Natural killer cell (primary cell): ENCODE measurements at regions of chr11 and their contacts with region 1.

Region 1: DNA sequence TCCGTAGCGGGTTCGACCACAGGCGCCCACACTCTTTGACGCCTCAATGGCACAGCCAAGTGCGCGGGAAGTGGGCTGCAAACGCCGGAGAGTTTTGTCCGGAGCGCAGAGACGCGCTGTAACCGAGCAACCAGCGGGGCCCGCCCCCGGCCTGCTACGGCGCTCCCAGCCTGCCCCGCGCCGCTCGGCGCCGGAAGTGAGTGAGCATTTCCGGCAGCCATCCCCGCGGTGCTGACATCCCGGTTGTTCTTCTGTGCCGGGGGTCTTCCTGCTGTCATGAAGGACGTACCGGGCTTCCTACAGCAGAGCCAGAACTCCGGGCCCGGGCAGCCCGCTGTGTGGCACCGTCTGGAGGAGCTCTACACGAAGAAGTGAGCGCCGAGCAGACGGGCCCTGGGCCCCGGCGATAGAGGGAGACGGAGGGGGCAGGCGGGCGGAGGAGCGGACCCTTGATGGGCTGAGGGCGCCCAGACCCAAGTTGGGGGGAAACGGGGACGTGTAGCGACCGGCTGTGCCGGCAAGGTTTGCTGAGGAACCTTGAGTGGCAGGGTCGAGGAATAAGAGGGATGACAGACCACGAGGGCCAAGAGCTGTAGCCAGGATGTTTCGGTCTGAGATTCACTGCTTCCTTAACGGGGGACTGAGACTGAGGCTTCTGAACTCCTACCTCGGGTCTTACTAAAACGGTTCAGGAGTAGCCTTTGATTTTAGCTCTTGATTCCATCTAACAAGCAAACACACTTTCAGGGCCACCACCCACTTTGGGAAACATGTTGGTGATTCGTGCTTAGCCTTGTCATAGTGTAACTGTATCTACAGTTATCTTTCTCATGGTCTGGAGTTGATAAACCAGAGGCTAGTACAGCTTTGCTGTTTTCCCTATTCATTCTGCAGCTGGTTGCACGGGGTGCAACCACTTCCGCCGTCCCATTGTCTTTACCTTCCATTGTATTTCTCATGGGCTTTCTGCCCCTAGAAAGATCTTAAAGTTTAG is at the start of gene PSMD13:
- DNase-seq: peak; percentile 87 to 94
- ATAC-seq: peak; percentile 76 to 90 (median 79)
- H3K4me3 ChIP-seq: peak within 1 kb of the TSS; percentile 99
- H3K4me3 Mint-ChIP-seq: peak within 1 kb of the TSS; percentile 97
- H3K27ac ChIP-seq: peak within 1 kb of the TSS; percentile 100
- H3K27ac Mint-ChIP-seq: peak within 1 kb of the TSS; percentile 98
- H3K4me1 ChIP-seq: peaks cover 20% of the 10 kb centered on the region
- H3K4me1 Mint-ChIP-seq: peaks cover 38 to 42% of the 10 kb centered on the region in 2 donors
- H3K27me3 ChIP-seq: no peaks in the 10 kb centered on the region
- H3K27me3 Mint-ChIP-seq: no peaks in the 10 kb centered on the region
- CTCF ChIP-seq: no peak
- total RNA-seq, gene PSMD13: 94.6 to 111 (median 104) TPM

Region 2: GRCh38 chr11:199782-200181 is 37.3 kb before region 1 on chr11:
- intact Hi-C with region 1: no loop called
- DNase-seq: no peak
- ATAC-seq: no peak
- H3K4me3 ChIP-seq: no peak overlapping the region
- H3K4me3 Mint-ChIP-seq: no peak overlapping the region
- H3K27ac ChIP-seq: no peak overlapping the region
- H3K27ac Mint-ChIP-seq: no peak overlapping the region
- H3K4me1 ChIP-seq: peaks cover 4% of the 10 kb centered on the region
- H3K4me1 Mint-ChIP-seq: peaks cover 14 to 19% of the 10 kb centered on the region in 2 donors
- H3K27me3 ChIP-seq: no peaks in the 10 kb centered on the region
- H3K27me3 Mint-ChIP-seq: no peaks in the 10 kb centered on the region
- CTCF ChIP-seq: no peak

Region 3: DNA sequence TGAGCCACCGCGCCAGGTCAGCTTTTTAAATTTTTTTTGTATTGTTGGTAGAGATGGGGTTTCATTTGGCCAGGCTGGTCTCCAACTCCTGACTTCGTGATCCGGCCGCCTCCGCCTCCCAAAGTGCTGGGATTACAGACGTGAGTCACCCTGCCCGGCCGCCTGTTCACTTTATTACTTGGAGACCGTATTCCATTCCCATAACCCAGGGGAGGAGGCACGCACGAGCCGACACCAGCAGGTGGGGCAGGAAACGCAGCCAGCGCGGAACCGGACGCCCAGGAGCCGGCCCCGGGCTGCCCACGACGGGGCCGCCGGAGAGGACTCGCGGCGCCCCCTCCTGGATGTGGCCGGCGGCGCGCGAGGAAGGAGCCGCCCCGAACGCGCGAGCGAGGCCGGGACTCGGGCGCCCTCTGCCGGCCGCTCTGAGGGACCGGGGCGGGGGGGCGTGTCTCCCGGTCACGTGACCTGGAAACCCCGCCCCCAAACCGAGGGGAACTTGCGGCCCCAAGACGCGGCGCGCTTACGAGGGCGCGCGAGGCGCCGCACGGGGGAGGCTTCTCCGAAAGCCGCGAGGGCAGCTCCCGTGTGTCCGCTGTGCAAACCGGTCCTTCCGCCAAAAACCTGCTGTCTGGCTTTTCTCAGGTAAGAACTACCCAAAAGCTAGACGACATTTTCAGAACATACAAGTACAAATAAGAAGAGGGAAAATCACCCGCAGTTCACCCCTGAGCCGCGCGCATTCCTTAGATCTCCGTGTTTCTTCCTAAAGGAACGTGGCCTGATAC is 281.6 kb after region 1 on chr11:
- intact Hi-C with region 1: loop called (anchors 5 kb)
- DNase-seq: peak; percentile 85 to 94
- ATAC-seq: peak; percentile 96 to 100 (median 97)
- H3K4me3 ChIP-seq: peak overlapping the region; percentile 2
- H3K4me3 Mint-ChIP-seq: peak overlapping the region; percentile 90
- H3K27ac ChIP-seq: no peak overlapping the region
- H3K27ac Mint-ChIP-seq: peak overlapping the region; percentile 53 to 65
- H3K4me1 ChIP-seq: peaks cover 9% of the 10 kb centered on the region
- H3K4me1 Mint-ChIP-seq: peaks cover 0 to 7% of the 10 kb centered on the region in 2 donors
- H3K27me3 ChIP-seq: no peaks in the 10 kb centered on the region
- H3K27me3 Mint-ChIP-seq: no peaks in the 10 kb centered on the region
- CTCF ChIP-seq: peak; percentile 99

Region 4: DNA sequence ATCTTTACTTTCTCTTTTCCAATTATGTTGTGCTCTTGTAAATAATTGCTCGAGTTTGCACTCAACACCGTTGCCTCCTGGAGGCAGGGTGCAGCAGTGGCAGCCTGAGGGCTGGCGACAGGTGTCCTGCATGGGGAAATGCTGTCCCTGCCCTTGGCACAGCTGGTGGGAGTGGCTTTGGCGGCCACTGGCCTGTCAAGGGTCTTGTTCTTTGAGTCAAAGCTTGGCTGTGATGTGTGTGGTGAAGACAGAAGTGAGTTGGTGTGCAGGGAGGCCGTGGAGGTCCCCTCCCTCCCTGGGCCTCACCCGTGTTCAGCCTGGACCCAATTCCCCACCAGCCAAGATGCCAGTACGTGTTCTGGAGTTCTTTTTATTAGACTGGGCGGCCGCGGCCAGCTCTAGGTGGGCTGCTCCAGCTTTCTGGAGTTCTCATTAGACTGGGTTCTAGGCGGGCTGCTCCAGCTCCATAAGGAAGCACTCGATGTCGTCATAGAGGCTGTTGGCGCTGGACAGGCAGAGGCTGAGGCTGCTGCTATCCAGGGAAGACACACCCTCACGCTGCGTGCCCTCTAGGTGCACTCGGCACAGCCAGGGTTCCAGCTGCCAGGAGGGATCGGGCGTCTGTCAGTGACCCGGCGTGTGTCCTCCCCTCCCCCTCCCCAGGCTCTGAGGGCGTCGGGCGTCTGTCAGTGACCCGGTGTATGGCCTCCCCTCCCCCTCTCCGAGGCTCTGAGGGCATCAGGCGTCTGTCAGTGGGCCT is 375.3 kb after region 1 on chr11:
- intact Hi-C with region 1: no loop called
- DNase-seq: peak in 1 of 2 donors; percentile 49
- ATAC-seq: no peak
- H3K4me3 ChIP-seq: no peak overlapping the region
- H3K4me3 Mint-ChIP-seq: peak overlapping the region; percentile 45
- H3K27ac ChIP-seq: no peak overlapping the region
- H3K27ac Mint-ChIP-seq: peak overlapping the region; percentile 83 to 89
- H3K4me1 ChIP-seq: peaks cover 39% of the 10 kb centered on the region
- H3K4me1 Mint-ChIP-seq: peaks cover 6 to 22% of the 10 kb centered on the region in 2 donors
- H3K27me3 ChIP-seq: no peaks in the 10 kb centered on the region
- H3K27me3 Mint-ChIP-seq: no peaks in the 10 kb centered on the region
- CTCF ChIP-seq: no peak